Activated naive CD4-positive, alpha-beta T cell treated with anti-CD3 and anti-CD28 coated beads, Interleukin-2, amount 10 ng/mL, durations not matched to agents 7 days and 5 days (primary cell): ENCODE measurements at regions of chr12 and their contacts with region 1.

Region 1: GRCh38 chr12:66860752-66861750 is 182.2 kb upstream of the GRIP1 start:
- DNase-seq: peak; percentile 80
- H3K4me3 Mint-ChIP-seq: no peak overlapping the region
- H3K27ac Mint-ChIP-seq: no peak overlapping the region
- H3K4me1 Mint-ChIP-seq: peaks cover 17% of the 10 kb centered on the region
- H3K27me3 Mint-ChIP-seq: peaks cover 12% of the 10 kb centered on the region

Region 2: DNA sequence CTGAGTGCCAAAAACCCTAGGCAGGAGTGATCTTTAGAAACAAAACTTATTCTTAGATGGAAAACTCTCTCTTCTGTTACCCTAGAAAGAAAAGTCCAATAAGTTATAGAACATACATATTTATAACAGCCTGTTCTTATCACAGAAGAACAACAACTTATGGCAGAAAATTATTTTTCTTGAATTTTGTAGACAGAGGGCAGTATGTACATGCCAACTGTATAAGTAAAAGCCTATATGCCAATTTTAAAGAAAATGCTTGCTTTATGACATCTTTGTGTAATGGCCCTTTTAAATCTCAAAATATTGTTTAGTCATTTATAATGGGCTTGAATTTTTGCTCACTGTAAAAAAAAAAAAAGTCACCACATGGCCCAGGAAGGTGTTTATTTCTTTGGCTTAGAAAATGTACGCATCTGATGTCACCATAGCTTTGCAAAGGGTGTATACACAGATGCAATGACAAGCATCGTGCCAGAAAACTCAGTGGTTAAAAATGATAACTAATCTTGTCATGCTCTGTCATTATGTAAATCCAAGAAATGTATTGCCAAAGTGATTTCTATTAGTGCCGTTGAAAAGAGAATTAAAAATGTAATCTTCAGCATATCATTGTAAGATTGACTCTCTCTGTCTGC is 143.9 kb before region 1 on chr12:
- CTCF ChIA-PET with region 1: interaction called, 17 read pairs
- DNase-seq: no peak
- H3K4me3 Mint-ChIP-seq: no peak overlapping the region
- H3K27ac Mint-ChIP-seq: no peak overlapping the region
- H3K4me1 Mint-ChIP-seq: peaks cover 29% of the 10 kb centered on the region
- H3K27me3 Mint-ChIP-seq: no peaks in the 10 kb centered on the region

Region 3: DNA sequence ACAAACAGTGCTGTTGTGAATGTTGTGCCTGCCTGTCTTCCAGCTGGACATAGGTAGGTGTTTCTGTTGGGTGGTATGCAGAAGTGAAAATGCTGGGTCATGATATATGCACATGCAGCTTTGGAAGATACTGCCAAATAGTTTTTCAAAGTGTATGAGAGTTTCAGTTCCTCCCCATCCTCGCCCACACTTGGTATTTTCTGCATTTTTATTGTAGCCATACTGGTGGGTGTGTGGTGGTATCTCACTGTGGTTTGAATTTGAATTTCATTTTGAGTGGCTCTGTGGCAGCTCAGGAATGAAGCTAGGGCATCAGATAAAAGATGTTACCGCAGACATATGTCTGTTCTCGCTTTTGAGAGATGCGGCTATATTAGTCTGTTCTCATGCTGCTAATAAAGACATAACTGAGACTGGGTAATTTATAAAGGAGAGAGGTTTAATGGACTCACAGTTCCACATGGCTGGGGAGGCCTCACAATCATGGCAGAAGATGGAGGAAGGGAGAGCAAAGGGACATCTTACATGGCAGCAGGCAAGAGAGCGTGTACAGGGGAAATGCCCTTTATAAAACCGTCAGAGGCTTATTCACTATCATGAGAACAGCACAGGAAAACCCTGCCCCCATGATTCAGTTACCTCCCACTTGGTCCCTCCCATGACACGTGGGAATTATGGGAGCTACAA is 591.2 kb after region 1 on chr12:
- CTCF ChIA-PET with region 1: no interaction called
- DNase-seq: no peak
- H3K4me3 Mint-ChIP-seq: no peak overlapping the region
- H3K27ac Mint-ChIP-seq: no peak overlapping the region
- H3K4me1 Mint-ChIP-seq: peaks cover 33% of the 10 kb centered on the region
- H3K27me3 Mint-ChIP-seq: peaks cover 9% of the 10 kb centered on the region